Gastrocnemius medialis (tissue), 4 donors: ENCODE measurements at regions of chr6 and their contacts with region 1.

Region 1: GRCh38 chr6:116100419-116101301 is at the start of gene NT5DC1:
- DNase-seq: peak; percentile 69 to 77
- ATAC-seq: peak; percentile 93 to 94
- H3K4me3 ChIP-seq: peak within 1 kb of the TSS; percentile 60 to 85 (median 72)
- H3K27ac ChIP-seq: peak within 1 kb of the TSS; percentile 86 to 96 (median 90)
- H3K4me1 ChIP-seq: peaks cover 41 to 48% of the 10 kb centered on the region in 2 donors
- H3K27me3 ChIP-seq: no peaks in the 10 kb centered on the region
- CTCF ChIP-seq: peak; percentile 35 to 60 (median 50)
- POLR2A ChIP-seq: peak; percentile 47 to 64
- total RNA-seq, gene NT5DC1: 7.0 to 15.4 (median 12.0) TPM

Region 2: DNA sequence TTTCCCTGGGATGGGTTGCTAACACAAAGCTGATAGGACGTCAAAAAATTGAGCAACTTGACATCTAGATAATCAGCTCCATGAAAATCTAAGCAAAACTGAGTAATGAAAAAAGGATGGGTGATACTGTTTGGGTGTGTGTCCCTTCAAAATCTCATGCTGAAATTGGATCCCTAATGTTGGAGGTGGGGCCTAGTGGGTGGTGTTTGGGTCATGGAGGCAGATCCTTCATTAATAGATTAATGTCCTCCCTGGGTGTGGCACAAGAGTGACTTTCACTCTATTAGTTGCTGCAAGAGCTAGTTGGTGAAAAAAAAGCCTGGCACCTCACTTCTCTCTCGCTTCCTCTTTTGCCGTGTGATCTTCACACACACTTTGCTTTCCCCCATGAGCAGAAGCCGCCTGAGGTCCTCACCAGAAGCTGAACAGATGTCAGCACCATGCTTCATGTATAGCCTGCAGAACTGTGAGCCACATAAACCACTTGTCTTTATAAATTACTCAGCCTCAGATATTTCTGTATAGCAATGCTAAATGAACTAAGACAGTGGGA is 200.9 kb before region 1 on chr6:
- in situ Hi-C with region 1: no loop called
- intact Hi-C with region 1: no loop called
- DNase-seq: no peak
- ATAC-seq: no peak
- H3K4me3 ChIP-seq: no peak overlapping the region
- H3K27ac ChIP-seq: no peak overlapping the region
- H3K4me1 ChIP-seq: no peaks in the 10 kb centered on the region
- H3K27me3 ChIP-seq: no peaks in the 10 kb centered on the region
- CTCF ChIP-seq: no peak
- POLR2A ChIP-seq: no peak

Region 3: DNA sequence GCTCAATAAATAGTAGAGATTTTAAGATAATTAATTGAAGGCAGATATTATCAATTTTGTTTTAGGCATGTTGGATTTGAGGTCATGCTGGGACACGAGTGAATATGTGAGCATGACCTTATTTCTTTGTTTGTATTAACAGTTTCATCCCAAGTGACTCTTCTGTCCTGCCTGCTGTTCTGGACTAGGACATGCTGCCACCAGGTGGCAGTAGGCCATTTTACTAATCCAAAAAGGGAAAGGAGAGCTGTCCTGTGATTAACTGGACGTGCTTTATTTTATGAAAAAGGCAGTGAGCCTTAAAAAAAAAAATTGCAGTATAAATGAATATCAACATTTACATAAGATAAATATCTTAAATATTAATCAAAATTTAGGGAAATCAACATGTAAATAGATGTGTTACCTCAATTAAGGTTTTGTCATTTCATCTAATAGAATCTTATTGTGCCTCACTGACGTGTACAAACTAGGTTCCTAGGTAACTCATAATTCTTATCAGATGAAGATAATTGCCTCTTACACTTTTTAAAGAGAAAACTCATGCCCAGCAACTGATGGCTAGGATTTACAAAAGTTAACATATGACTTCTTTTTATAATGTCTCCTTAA is 89.8 kb before region 1 on chr6:
- in situ Hi-C with region 1: loop called (anchors 5 kb)
- intact Hi-C with region 1: loop called (anchors 1 kb)
- DNase-seq: peak; percentile 25 to 50
- ATAC-seq: peak; percentile 75 to 86
- H3K4me3 ChIP-seq: no peak overlapping the region
- H3K27ac ChIP-seq: peak overlapping the region in 1 of 4 donors; percentile 3
- H3K4me1 ChIP-seq: peaks cover 10 to 22% of the 10 kb centered on the region in 2 donors
- H3K27me3 ChIP-seq: no peaks in the 10 kb centered on the region
- CTCF ChIP-seq: peak; percentile 65 to 87 (median 71)
- POLR2A ChIP-seq: no peak

Region 4: GRCh38 chr6:116059713-116060571 is 40.7 kb before region 1 on chr6:
- in situ Hi-C with region 1: no loop called
- intact Hi-C with region 1: loop called (anchors 5 kb)
- DNase-seq: peak in 1 of 2 donors; percentile 18
- ATAC-seq: peak; percentile 49 to 66
- H3K4me3 ChIP-seq: peak overlapping the region; percentile 39 to 59 (median 54)
- H3K27ac ChIP-seq: peak overlapping the region; percentile 76 to 85 (median 80)
- H3K4me1 ChIP-seq: peaks cover 16 to 29% of the 10 kb centered on the region in 2 donors
- H3K27me3 ChIP-seq: no peaks in the 10 kb centered on the region
- CTCF ChIP-seq: no peak
- POLR2A ChIP-seq: peak in 1 of 2 donors; percentile 3